ENCODE measurements at regions of chr22 and their contacts with region 1.

Region 1: GRCh38 chr22:31080848-31081649 is at the start of gene SMTN:
- DNase-seq: peak; percentile 56
- ATAC-seq: peak; percentile 74
- H3K4me3 ChIP-seq: peak within 1 kb of the TSS; percentile 80
- H3K27ac ChIP-seq: peak within 1 kb of the TSS; percentile 71
- H3K4me1 ChIP-seq: peaks cover 28% of the 10 kb centered on the region
- H3K27me3 ChIP-seq: no peaks in the 10 kb centered on the region
- CTCF ChIP-seq: no peak
- EP300 ChIP-seq: no peak
- POLR2A ChIP-seq: peak; percentile 91
- RAD21 ChIP-seq: no peak
- polyA plus RNA-seq, gene SMTN: 0.92 to 2.6 TPM

Region 2: GRCh38 chr22:30843245-30843644 is 237.8 kb before region 1 on chr22:
- CTCF ChIA-PET with region 1: no interaction called
- POLR2A ChIA-PET with region 1: no interaction called
- RAD21 ChIA-PET with region 1: no interaction called
- SMC1A ChIA-PET with region 1: no interaction called
- in situ Hi-C with region 1: no loop called
- intact Hi-C with region 1: no loop called
- DNase-seq: no peak
- ATAC-seq: no peak
- H3K4me3 ChIP-seq: no peak overlapping the region
- H3K27ac ChIP-seq: no peak overlapping the region
- H3K4me1 ChIP-seq: no peaks in the 10 kb centered on the region
- H3K27me3 ChIP-seq: no peaks in the 10 kb centered on the region; a peak in 1 of 4 replicates
- CTCF ChIP-seq: no peak
- EP300 ChIP-seq: no peak
- POLR2A ChIP-seq: no peak
- RAD21 ChIP-seq: no peak

Region 3: DNA sequence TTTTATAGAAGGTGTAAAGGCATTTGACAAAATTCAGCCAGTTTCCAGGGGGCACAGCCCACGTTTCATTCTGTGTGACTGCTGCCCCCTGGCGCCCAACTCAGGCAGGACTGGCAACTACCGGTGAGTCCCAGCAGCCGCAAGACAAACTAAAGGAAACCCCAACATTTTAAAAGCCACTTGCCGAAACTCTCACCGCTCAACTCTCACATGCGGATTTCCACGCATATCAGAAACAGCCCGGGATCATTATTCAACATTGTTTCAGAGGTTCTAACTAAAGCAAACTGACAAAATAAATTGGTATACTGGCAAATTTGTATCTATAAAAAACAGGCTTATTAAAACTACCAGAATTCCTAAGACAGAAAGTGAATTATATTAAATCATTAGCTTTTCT is 160.6 kb before region 1 on chr22:
- CTCF ChIA-PET with region 1: interaction called, 59 read pairs
- POLR2A ChIA-PET with region 1: interaction called, 5 read pairs
- RAD21 ChIA-PET with region 1: interaction called, 34 read pairs
- SMC1A ChIA-PET with region 1: interaction called, 11 read pairs
- in situ Hi-C with region 1: no loop called
- intact Hi-C with region 1: no loop called
- DNase-seq: peak; percentile 27
- ATAC-seq: peak; percentile 85
- H3K4me3 ChIP-seq: peak overlapping the region; percentile 50; the same call in 1 of the 2 replicates
- H3K27ac ChIP-seq: no peak overlapping the region
- H3K4me1 ChIP-seq: peaks cover 3% of the 10 kb centered on the region; the same call in 1 of the 2 replicates
- H3K27me3 ChIP-seq: no peaks in the 10 kb centered on the region
- CTCF ChIP-seq: peak; percentile 85 to 87 (median 86)
- EP300 ChIP-seq: no peak
- POLR2A ChIP-seq: no peak
- RAD21 ChIP-seq: peak; percentile 64

Region 4: DNA sequence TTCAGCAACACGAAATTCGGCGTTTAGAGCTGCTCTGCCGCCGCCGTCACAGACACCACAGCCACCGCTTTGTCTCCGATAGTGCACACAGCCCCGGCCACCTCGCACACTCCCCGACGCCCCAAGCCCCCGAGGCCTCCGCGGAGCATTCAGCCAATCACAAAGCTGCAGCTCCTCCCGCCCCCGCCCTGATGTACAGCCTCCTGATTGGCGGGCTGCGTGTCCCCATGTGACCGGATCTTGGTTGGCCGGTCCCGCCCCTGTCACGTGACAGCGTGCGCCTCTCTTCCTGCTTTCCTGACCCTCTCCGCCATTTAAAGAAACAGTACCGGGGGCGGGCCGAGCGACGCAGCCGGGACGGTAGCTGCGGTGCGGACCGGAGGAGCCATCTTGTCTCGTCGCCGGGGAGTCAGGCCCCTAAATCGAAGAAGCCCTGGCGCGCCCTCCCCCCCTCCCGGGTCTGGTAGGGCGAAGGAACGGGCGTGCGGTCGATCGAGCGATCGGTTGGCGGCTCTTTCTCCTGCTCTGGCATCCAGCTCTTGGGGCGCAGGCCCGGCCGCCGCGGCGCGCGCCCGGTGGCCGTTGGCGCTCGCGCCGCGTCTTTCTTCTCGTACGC is 112.0 kb before region 1 on chr22 and contains the start of gene TUG1:
- CTCF ChIA-PET with region 1: interaction called, 46 read pairs
- POLR2A ChIA-PET with region 1: interaction called, 7 read pairs
- RAD21 ChIA-PET with region 1: interaction called, 22 read pairs
- SMC1A ChIA-PET with region 1: interaction called, 5 read pairs
- in situ Hi-C with region 1: loop called (anchors 5 kb)
- intact Hi-C with region 1: loop called (anchors 5 kb)
- DNase-seq: peak; percentile 90
- ATAC-seq: peak; percentile 93
- H3K4me3 ChIP-seq: peak within 1 kb of the TSS; percentile 82
- H3K27ac ChIP-seq: peak within 1 kb of the TSS; percentile 93
- H3K4me1 ChIP-seq: peaks cover 10% of the 10 kb centered on the region
- H3K27me3 ChIP-seq: no peaks in the 10 kb centered on the region
- CTCF ChIP-seq: no peak
- EP300 ChIP-seq: no peak
- POLR2A ChIP-seq: peak; percentile 83
- RAD21 ChIP-seq: no peak
- polyA plus RNA-seq, gene TUG1: 21.6 to 23.4 TPM

Region 5: GRCh38 chr22:31119026-31119717 is 38.1 kb after region 1 on chr22:
- CTCF ChIA-PET with region 1: no interaction called
- POLR2A ChIA-PET with region 1: no interaction called
- RAD21 ChIA-PET with region 1: no interaction called
- SMC1A ChIA-PET with region 1: no interaction called
- in situ Hi-C with region 1: no loop called
- intact Hi-C with region 1: no loop called
- DNase-seq: no peak
- ATAC-seq: no peak
- H3K4me3 ChIP-seq: no peak overlapping the region
- H3K27ac ChIP-seq: no peak overlapping the region
- H3K4me1 ChIP-seq: no peaks in the 10 kb centered on the region
- H3K27me3 ChIP-seq: no peaks in the 10 kb centered on the region
- CTCF ChIP-seq: no peak
- EP300 ChIP-seq: no peak
- POLR2A ChIP-seq: no peak
- RAD21 ChIP-seq: no peak

Region 6: DNA sequence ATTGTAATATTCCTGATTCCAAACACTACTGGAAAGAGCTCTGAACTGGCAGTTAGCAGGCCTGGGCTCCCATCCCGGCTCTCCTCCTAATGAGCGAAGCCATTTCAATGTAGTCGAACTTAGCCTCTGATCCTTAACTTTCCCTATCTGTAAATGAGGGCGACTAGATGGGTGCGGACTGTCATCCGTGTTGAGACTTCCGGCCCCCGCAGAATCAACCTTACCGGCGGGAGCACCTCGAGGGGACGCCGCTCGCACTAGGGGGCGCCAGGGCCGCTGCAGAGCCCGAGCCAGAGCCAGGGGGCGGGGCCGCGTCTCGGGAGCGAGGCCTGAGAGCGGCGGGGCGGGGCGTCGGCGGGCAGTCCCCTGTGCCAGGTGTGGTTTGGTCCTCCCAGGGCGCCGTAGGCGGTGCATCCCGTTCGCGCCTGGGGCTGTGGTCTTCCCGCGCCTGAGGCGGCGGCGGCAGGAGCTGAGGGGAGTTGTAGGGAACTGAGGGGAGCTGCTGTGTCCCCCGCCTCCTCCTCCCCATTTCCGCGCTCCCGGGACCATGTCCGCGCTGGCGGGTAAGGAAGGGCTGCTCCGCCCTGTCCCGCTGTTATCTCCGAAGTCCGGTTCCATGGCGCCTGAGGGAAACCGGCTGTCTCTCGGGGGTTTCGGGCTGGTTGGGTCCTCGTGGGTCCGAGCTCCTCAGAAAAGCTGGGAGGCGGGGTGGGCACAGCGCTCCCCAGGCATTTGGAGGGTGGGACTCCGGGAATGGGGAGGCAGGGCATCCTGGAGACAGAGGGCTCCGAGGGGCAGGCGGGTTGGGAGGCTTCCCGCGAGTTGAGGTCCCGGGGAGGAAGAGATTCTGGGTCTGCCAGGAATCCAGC is 131.0 kb after region 1 on chr22 and contains the start of gene LIMK2:
- CTCF ChIA-PET with region 1: interaction called, 11 read pairs
- POLR2A ChIA-PET with region 1: interaction called, 3 read pairs
- RAD21 ChIA-PET with region 1: interaction called, 4 read pairs
- SMC1A ChIA-PET with region 1: no interaction called
- in situ Hi-C with region 1: no loop called
- intact Hi-C with region 1: no loop called
- DNase-seq: peak; percentile 60
- ATAC-seq: peak; percentile 97
- H3K4me3 ChIP-seq: peak within 1 kb of the TSS; percentile 84
- H3K27ac ChIP-seq: peak within 1 kb of the TSS; percentile 87
- H3K4me1 ChIP-seq: peaks cover 4% of the 10 kb centered on the region
- H3K27me3 ChIP-seq: no peaks in the 10 kb centered on the region
- CTCF ChIP-seq: peak; percentile 72 to 95 (median 86)
- EP300 ChIP-seq: no peak
- POLR2A ChIP-seq: peak; percentile 91
- RAD21 ChIP-seq: peak; percentile 77
- polyA plus RNA-seq, gene LIMK2: 2.9 to 5.0 TPM

Region 7: DNA sequence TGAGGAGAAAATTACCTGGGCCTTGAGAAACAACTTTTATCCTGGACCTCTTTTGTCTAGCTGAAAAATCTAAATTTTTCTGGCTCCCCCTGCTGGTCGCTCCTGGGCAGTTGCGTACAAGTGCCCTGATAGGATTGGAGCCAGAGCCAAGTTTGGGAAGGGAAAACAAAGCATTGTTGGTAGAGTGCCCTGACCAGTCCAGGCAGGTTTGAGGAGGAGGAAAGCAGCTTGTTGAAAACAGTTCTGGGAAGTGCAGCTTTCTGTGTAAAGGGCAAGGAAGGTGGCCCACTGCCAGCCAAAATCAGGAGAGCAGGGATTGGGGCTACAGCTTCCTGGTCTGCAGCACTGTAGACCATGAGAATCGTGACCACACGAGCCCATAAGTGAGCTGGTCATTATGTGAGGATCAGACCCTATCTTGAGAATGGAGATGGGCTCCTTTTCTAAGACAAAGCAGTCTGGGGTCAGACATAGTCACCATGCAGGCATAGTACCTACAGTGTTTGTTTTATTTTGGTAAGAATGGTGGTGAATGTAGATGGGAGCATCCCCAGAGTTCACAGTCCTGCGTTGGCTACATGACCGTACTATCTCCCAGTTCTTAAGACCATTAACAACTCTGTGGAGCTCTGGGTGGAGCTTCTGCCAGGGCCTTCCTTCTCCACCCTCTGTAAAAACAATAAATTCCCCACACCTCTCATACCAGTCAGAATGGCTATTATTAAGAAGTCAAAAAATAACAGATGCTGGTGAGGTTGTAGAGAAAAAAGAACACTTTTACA is 232.5 kb after region 1 on chr22:
- CTCF ChIA-PET with region 1: interaction called, 6 read pairs
- POLR2A ChIA-PET with region 1: no interaction called
- RAD21 ChIA-PET with region 1: no interaction called
- SMC1A ChIA-PET with region 1: no interaction called
- in situ Hi-C with region 1: no loop called
- intact Hi-C with region 1: loop called (anchors 5 kb)
- DNase-seq: no peak
- ATAC-seq: peak; percentile 76
- H3K4me3 ChIP-seq: no peak overlapping the region
- H3K27ac ChIP-seq: no peak overlapping the region
- H3K4me1 ChIP-seq: peaks cover under 1% of the 10 kb centered on the region
- H3K27me3 ChIP-seq: no peaks in the 10 kb centered on the region
- CTCF ChIP-seq: peak; percentile 78 to 89 (median 82)
- EP300 ChIP-seq: no peak
- POLR2A ChIP-seq: no peak
- RAD21 ChIP-seq: peak; percentile 64